ENCODE measurements at regions of chr4 and their contacts with region 1.

Region 1: DNA sequence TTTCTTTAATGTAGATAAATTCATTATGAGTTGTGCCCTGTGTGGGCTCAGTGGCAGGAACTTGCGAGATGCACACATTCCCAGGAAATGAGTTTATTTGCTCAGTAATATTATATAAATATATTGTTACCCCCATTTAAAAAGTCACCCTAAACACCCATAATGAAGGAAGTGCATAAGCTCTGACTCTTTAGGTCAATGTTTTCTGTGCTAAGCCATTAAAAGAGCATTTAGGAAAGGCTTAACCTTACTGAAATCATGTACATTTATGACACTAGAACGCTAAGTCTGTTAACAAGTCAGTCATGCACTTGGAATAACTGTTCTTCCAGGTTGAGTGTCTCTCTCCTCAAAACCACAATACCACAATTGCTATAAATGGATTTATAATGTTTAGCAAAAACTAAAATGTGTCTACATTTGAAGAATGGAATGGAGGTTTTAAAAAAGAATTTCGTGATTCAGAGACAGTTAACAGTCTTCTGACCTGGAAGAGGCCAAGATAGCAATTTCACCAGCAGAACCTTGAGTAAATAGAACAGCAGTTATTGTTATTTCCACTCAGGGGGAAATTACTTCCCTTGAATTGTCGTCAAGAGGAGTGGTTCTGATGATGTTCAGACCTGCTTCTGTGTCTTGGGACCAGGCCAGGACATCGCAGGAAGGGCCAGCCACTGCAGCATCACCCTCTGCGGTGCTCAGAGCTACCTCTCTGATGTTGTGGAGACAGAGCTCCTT is 91.1 kb upstream of the VEGFC start:
- DNase-seq: peak; percentile 96
- H3K4me3 ChIP-seq: no peak overlapping the region; the same call in 1 of the 2 replicates
- CTCF ChIP-seq: no peak

Region 2: GRCh38 chr4:176902710-176903323 is 19.0 kb after region 1 on chr4:
- CTCF ChIA-PET with region 1: no interaction called
- POLR2A ChIA-PET with region 1: interaction called, 12 read pairs
- DNase-seq: peak; percentile 90
- H3K4me3 ChIP-seq: peak overlapping the region; percentile 16
- CTCF ChIP-seq: no peak

Measured in AG04449 (cell line).